ENCODE measurements at regions of chr9 and their contacts with region 1.

Region 1: GRCh38 chr9:68999393-69000105 is 14.4 kb downstream of the PRKACG start:
- DNase-seq: peak; percentile 75
- CTCF ChIP-seq: peak; percentile 84

Region 2: DNA sequence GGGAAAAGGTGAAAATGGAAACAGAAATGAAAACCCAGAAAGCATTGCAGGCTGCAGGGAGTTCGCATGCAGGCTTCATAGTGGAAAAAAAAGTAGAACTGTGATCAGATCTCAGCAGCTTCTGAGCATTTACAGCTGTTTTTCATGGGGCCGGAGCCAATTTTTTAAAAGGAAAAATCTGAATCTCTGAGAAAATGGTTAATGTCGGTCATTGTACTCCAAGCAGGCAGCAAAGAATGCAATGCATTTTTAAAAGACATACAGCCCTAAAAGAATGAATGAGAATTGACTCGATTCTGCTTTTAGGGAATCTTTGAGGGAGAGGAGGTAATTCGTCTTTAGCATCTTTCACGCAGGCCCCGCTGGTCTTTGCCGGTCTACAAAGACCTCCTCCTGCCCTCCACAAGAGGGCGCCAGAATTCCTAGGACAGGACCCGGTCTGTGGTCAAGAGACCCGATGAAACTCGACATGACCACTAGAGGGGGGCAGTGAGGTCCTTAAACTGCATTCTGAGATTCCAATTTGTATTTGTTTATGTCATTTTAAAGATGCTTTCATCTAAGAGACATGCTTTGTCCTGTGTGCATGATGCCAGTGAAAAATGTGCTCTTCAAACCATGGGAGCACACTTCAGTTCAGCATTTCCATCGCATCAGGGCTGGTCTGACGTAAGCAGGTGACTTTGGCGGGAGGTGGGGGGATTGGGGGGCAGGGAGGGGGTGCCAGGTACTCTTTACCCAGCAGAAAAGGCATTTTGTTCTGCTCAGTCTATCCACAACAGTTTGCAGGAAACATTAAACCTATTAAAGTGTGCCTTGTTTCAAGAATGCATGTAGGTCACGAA is 415.1 kb before region 1 on chr9:
- in situ Hi-C with region 1: loop called (anchors 10 kb)
- DNase-seq: peak; percentile 78
- CTCF ChIP-seq: peak; percentile 98

Region 3: GRCh38 chr9:68704814-68705530 is 294.6 kb before region 1 on chr9 and contains the start of gene PIP5K1B:
- in situ Hi-C with region 1: loop called (anchors 25 kb)
- DNase-seq: peak; percentile 91
- CTCF ChIP-seq: no peak

Region 4: GRCh38 chr9:68861436-68861835 is 138.1 kb before region 1 on chr9:
- in situ Hi-C with region 1: no loop called
- DNase-seq: no peak
- CTCF ChIP-seq: no peak

Region 5: GRCh38 chr9:69279084-69279729 is 279.7 kb after region 1 on chr9:
- in situ Hi-C with region 1: no loop called
- DNase-seq: no peak
- CTCF ChIP-seq: no peak

Region 6: DNA sequence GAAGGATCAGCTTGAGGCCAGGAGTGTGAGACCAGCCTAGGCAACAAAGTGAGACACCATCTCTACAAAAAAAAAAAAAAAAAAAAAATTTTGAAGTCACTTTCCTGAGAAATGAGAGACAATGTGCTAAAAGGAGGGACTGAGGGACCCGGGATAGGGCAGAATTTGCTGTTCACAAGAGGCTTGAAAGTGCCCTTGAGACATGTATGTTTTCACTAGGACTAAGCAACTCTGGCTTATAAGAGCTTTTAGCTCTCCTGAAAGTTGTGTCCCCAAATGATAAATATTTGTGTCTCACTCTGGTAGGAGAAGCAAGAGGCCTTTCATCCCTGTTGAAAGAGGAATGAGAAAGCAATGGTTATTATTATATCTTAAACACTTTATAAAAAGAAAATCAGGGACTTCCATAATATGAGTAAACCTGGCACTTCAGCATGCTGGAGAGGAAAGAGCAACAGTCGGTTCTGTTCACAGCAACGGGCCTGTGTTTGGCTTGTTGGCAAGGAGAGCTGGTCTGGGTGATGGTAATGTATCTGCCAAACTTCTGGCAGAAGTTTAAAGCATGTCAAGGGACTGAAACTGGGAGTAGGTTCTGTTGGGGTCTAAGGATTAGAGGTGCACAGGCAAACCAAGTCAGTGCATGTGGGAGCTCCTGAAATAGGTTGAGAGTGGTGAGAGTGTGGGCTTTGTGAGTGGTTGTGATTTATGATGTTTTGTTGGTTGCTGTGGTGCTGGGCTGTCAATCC is 357.7 kb after region 1 on chr9:
- in situ Hi-C with region 1: no loop called
- DNase-seq: no peak
- CTCF ChIP-seq: no peak

Measured in GM13977 (cell line).